Psoas muscle (tissue), 8 donors: ENCODE measurements at regions of chr2 and their contacts with region 1.

Region 1: DNA sequence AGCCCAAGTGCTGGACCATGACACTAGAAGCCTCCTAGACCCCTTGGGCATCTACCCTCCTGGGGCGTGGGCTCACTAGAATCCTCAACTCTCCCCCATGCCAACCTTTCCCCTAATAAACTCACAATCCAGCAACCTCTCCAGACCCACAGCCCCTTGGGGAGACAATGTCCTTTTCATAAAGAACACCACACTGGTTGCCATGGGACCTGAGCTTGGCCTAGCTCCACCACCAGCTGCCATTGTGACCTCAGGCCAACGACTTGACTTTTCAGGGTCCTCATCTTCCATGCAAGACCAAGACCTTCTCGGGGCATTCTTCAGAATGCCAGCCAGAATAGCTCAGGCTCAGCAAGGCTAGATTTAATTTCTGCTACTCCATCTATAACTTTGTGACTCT is 128.1 kb upstream of the NPAS2 start:
- DNase-seq: no peak
- ATAC-seq: no peak
- H3K4me3 ChIP-seq: no peak overlapping the region
- H3K27ac ChIP-seq: no peak overlapping the region
- H3K4me1 ChIP-seq: no peaks in the 10 kb centered on the region
- H3K27me3 ChIP-seq: no peaks in the 10 kb centered on the region
- CTCF ChIP-seq: no peak

Region 2: DNA sequence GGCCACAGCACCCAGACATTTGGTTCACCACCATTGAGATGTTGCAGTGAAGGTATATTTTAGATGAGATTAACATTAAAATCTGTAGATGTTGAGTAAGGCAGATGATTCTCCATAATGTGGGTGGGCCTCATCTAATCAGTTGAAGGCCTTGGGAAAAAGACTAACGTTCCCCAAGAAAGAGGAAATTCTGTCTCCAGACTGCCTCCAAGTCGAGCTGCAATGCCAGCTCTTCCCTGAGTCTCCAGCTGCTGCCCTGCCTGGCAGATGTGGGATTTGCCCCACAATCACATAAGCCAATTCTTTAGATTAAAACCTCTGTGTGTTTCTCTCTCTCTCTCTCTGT is 27.1 kb before region 1 on chr2:
- intact Hi-C with region 1: loop called in 1 of 2 experiments (anchors 1 kb)
- DNase-seq: no peak
- ATAC-seq: no peak
- H3K4me3 ChIP-seq: no peak overlapping the region
- H3K27ac ChIP-seq: no peak overlapping the region
- H3K4me1 ChIP-seq: no peaks in the 10 kb centered on the region
- H3K27me3 ChIP-seq: no peaks in the 10 kb centered on the region
- CTCF ChIP-seq: no peak